ENCODE measurements at regions of chr3 and their contacts with region 1.

Region 1: DNA sequence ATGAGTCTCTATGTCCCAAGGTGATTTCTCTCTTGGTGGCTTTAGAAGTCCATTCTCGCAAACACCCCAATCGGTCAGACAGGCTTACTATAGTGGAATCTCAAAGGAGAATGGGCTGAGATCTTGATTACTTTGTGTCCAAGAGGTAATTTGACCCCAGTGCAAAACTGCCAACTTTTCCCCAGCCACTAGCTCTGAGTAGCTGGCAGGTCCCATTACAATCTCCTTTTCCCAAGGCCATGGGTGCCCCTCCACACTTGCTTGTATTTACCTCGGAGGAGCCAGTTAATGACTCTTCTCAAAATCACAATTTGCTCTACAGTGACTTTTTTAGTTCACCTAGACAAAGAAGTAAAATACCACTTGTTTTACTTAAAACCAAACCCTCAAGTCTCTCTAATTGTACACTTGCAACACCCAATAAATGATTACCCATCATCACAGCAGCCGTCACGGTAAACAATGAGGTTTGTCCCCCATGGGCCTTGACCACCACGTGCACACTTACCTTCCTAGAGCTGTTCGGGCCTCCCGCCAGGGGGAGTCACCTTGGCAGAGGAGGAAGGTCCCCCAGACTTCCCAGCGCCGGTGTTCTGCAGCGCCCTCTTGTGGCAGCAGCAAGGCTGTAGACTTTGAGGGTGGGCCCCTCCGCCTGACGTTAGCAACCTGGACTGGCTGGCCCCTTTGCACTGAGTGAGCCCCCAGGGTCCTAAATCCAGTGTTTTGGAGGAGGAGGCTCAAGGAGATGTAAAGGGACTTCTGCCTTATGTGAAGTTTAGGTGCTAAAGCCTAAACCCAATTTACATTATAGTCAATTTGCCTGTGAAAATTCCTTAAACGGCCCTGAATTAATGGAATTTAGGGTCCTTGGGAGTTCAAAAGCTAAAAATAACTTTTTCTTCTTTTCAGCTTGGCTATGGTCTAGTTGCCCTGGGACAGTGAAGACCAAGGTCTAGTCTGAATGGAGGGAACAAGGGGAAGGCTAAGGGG is 18.6 kb upstream of the HDAC11 start:
- DNase-seq: peak; percentile 93
- ATAC-seq: peak; percentile 98
- H3K4me3 Mint-ChIP-seq: no peak overlapping the region
- H3K27ac Mint-ChIP-seq: 0 out of 2 replicates have a peak overlapping the region, but pooled peaks have one; percentile 41
- H3K4me1 Mint-ChIP-seq: peaks cover 14% of the 10 kb centered on the region
- H3K27me3 Mint-ChIP-seq: peaks cover 35% of the 10 kb centered on the region
- CTCF ChIP-seq: peak; percentile 94

Region 2: DNA sequence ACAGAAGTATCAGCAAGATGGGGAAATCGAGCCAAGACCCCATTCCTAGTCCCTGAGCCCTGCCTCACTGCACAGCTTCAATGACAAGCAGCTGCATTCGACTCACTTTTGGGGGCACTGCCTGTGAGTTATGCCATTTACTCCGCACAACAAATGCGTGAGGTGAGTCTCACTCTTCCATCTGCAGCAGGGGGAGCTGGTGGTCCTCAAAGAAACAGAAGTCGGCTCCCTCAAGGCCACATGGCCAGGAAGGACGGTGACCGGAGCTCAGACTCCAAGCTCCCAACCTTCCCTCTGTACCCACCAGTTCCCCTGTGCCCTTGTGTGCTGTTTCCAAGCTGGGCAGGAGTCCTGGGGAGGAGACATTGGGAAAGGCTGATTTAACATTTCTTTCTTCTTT is 260.5 kb before region 1 on chr3:
- CTCF ChIA-PET with region 1: interaction called, 12 read pairs
- POLR2A ChIA-PET with region 1: no interaction called
- DNase-seq: peak; percentile 64
- ATAC-seq: peak; percentile 80
- H3K4me3 Mint-ChIP-seq: no peak overlapping the region
- H3K27ac Mint-ChIP-seq: peak overlapping the region; percentile 36; the same call in 1 of the 2 replicates
- H3K4me1 Mint-ChIP-seq: peaks cover 18% of the 10 kb centered on the region
- H3K27me3 Mint-ChIP-seq: no peaks in the 10 kb centered on the region
- CTCF ChIP-seq: 0 out of 2 replicates have a peak, but pooled peaks have one; percentile 19

Region 3: GRCh38 chr3:13229273-13229949 is 232.1 kb before region 1 on chr3:
- CTCF ChIA-PET with region 1: interaction called, 10 read pairs
- POLR2A ChIA-PET with region 1: no interaction called
- DNase-seq: peak; percentile 65
- ATAC-seq: peak; percentile 99
- H3K4me3 Mint-ChIP-seq: no peak overlapping the region
- H3K27ac Mint-ChIP-seq: no peak overlapping the region
- H3K4me1 Mint-ChIP-seq: peaks cover 24% of the 10 kb centered on the region
- H3K27me3 Mint-ChIP-seq: no peaks in the 10 kb centered on the region
- CTCF ChIP-seq: peak; percentile 20; the same call in 1 of the 2 replicates

Region 4: GRCh38 chr3:13346481-13347389 is 114.7 kb before region 1 on chr3:
- CTCF ChIA-PET with region 1: interaction called, 24 read pairs
- POLR2A ChIA-PET with region 1: no interaction called
- DNase-seq: peak; percentile 58
- ATAC-seq: peak; percentile 68
- H3K4me3 Mint-ChIP-seq: peak overlapping the region; percentile 59
- H3K27ac Mint-ChIP-seq: peak overlapping the region; percentile 97
- H3K4me1 Mint-ChIP-seq: peaks cover 73% of the 10 kb centered on the region
- H3K27me3 Mint-ChIP-seq: no peaks in the 10 kb centered on the region
- CTCF ChIP-seq: no peak

Region 5: DNA sequence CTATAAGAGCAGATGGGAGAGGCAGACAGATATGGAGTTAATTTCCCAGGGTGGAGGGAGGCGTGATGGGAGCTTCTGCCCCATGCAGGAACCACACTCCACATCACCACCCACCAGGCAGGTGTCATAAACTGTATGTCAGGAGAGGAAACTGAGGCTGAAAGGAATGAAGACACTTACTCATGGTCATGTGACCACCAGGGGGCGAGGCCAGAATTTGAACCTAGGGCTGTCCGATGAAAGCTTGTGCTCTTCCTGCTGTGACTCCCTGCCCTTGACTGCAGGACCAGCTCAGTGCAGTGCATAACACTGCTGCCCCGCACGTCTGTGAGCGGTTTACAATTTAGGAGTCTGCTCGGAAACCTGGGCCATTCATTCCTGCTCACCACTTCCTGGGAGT is 70.2 kb before region 1 on chr3:
- CTCF ChIA-PET with region 1: interaction called, 11 read pairs
- POLR2A ChIA-PET with region 1: no interaction called
- DNase-seq: no peak
- ATAC-seq: no peak
- H3K4me3 Mint-ChIP-seq: no peak overlapping the region
- H3K27ac Mint-ChIP-seq: no peak overlapping the region; the same call in 1 of the 2 replicates
- H3K4me1 Mint-ChIP-seq: peaks cover 3% of the 10 kb centered on the region
- H3K27me3 Mint-ChIP-seq: no peaks in the 10 kb centered on the region
- CTCF ChIP-seq: 0 out of 2 replicates have a peak, but pooled peaks have one; percentile 28

Region 6: GRCh38 chr3:13473020-13473419 is 11.6 kb after region 1 on chr3:
- CTCF ChIA-PET with region 1: interaction called, 11 read pairs
- POLR2A ChIA-PET with region 1: no interaction called
- DNase-seq: no peak
- ATAC-seq: peak; percentile 67
- H3K4me3 Mint-ChIP-seq: no peak overlapping the region
- H3K27ac Mint-ChIP-seq: no peak overlapping the region
- H3K4me1 Mint-ChIP-seq: peaks cover 39% of the 10 kb centered on the region
- H3K27me3 Mint-ChIP-seq: peaks cover 58% of the 10 kb centered on the region
- CTCF ChIP-seq: no peak

Region 7: DNA sequence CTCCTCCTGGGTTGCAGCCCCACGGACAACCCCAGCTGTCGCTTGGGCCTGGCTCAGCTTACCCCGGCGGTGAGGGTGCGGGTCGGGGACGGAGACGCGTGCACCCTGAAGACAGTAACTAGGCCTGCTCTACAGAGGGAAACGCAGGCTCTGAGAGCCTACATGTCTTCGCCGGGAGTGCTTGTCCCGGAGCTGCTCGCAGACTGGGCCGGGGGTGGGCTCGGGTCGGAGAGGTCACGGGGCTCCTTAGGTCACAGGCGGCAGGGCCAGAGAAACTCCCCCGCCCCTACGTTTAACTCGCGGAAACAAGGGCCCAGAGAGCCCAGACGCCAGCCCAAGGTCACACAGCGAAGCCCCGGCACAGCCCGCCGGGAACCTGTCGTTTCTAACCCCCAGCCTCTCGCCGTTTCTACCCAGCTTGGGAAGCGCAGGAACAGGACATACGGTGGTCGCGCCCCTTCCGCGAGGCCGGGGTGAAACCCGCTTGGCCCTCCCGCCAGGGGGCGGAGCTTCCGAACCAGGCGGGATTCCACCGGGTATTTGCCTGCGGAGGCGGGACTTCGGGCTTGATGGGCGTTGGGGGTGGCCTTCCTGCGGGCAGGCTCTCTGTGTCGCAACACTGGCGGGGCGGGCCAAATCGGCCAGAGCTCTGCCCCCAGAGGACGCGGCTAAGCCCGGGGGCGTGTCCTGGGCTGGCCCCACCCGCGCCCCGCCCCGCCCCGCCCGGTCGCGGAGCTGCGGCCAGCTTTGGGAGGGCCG is 18.3 kb after region 1 on chr3 and contains the start of gene HDAC11:
- CTCF ChIA-PET with region 1: interaction called, 16 read pairs
- POLR2A ChIA-PET with region 1: interaction called, 5 read pairs
- DNase-seq: peak; percentile 99
- ATAC-seq: peak; percentile 93
- H3K4me3 Mint-ChIP-seq: peak within 1 kb of the TSS; percentile 85
- H3K27ac Mint-ChIP-seq: peak within 1 kb of the TSS; percentile 91
- H3K4me1 Mint-ChIP-seq: peaks cover 33% of the 10 kb centered on the region
- H3K27me3 Mint-ChIP-seq: peaks cover 28% of the 10 kb centered on the region
- CTCF ChIP-seq: no peak
- total RNA-seq, gene HDAC11: 11.5 to 12.5 TPM (median 12.0 TPM) in 3 replicates

Region 8: DNA sequence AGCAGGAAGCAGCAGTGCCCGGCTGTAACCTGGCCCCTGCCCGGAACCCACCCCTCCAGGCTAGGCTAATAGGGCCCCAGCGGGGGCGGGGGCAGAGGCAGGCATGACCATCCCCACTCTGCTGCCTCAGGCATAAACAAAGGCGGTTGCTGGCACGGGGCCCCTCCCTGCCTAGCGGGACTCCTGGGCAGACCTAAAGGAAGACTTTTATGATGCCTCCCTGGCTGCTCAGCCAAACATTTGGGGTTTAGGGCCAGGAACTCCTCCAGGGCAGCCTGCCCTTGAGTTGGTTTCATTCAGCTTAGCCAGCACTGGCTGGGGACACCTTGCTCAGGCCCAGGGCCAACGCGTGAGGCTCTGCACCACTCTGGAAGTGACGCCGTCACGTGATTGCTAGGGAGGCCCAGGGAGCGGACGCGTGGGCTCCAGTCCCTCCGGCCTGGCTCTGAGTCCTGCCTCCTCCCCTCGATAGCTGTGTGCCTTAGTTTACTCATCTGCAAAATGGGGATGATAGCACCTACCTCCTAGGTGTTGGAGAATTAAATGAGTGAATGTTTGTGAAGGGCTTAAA is 46.4 kb after region 1 on chr3:
- CTCF ChIA-PET with region 1: no interaction called
- POLR2A ChIA-PET with region 1: no interaction called
- DNase-seq: no peak
- ATAC-seq: peak; percentile 65
- H3K4me3 Mint-ChIP-seq: no peak overlapping the region
- H3K27ac Mint-ChIP-seq: no peak overlapping the region
- H3K4me1 Mint-ChIP-seq: peaks cover 9% of the 10 kb centered on the region
- H3K27me3 Mint-ChIP-seq: no peaks in the 10 kb centered on the region
- CTCF ChIP-seq: no peak

Region 9: GRCh38 chr3:13673209-13673608 is 211.7 kb after region 1 on chr3:
- CTCF ChIA-PET with region 1: no interaction called
- POLR2A ChIA-PET with region 1: no interaction called
- DNase-seq: no peak
- ATAC-seq: peak; percentile 73
- H3K4me3 Mint-ChIP-seq: no peak overlapping the region
- H3K27ac Mint-ChIP-seq: no peak overlapping the region
- H3K4me1 Mint-ChIP-seq: no peaks in the 10 kb centered on the region
- H3K27me3 Mint-ChIP-seq: peaks cover 4% of the 10 kb centered on the region
- CTCF ChIP-seq: peak; percentile 27; the same call in 1 of the 2 replicates